CD4-positive, alpha-beta T cell (primary cell): ENCODE measurements at regions of chr5 and their contacts with region 1.

Region 1: GRCh38 chr5:79612667-79613198 is 492 bp downstream of the TENT2 start:
- DNase-seq: no peak
- ATAC-seq: no peak
- H3K4me3 ChIP-seq: peak overlapping the region; percentile 81
- H3K4me3 Mint-ChIP-seq: peak overlapping the region; percentile 91
- H3K27ac ChIP-seq: peak overlapping the region; percentile 76 to 90
- H3K27ac Mint-ChIP-seq: peak overlapping the region; percentile 98
- H3K4me1 ChIP-seq: peaks cover 14% of the 10 kb centered on the region
- H3K4me1 Mint-ChIP-seq: peaks cover 42% of the 10 kb centered on the region
- H3K27me3 ChIP-seq: no peaks in the 10 kb centered on the region
- H3K27me3 Mint-ChIP-seq: no peaks in the 10 kb centered on the region
- CTCF ChIP-seq: no peak

Region 2: DNA sequence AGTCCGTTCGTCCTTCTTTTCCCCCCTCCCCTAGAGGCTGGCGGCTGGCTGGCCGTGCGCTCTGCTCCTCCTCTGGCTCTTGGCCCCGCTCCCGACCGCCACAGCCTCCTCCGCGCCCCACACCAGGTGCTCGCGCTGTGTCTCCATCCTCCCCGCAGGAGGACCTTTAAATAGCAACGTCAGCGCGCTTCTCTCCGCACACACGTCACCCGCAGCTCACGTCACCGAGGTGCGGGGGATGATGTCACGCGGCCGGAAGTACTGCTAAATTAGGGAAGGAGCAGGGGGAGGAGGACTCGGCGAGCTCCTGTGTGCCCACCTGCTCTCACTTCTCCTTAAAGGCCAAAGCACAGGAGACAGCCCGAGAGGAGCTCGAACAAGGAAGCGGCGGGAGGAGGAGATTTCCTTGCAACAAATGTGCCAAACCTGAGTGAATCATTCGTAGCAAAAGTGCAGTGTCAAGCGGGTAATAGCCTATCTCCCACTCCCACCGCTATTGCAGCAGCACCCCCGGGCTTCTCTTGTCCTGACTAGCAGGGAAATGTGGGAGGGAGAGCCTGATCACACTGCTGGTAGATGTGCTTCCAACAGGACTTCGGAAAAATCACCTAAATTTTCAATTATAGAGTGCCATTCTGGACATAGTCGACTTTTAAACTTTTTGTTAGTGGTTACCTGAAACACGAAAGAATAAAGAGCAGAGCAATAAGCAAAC is 98.2 kb before region 1 on chr5:
- CTCF ChIA-PET with region 1: no interaction called
- POLR2A ChIA-PET with region 1: no interaction called
- intact Hi-C with region 1: loop called (anchors 1 to 5 kb)
- DNase-seq: peak; percentile 76 to 97 (median 87)
- ATAC-seq: peak; percentile 85
- H3K4me3 ChIP-seq: peak overlapping the region; percentile 79
- H3K4me3 Mint-ChIP-seq: peak overlapping the region; percentile 98
- H3K27ac ChIP-seq: peak overlapping the region; percentile 69 to 89
- H3K27ac Mint-ChIP-seq: peak overlapping the region; percentile 96
- H3K4me1 ChIP-seq: peaks cover 19% of the 10 kb centered on the region
- H3K4me1 Mint-ChIP-seq: peaks cover 41% of the 10 kb centered on the region
- H3K27me3 ChIP-seq: peaks cover 5 to 15% of the 10 kb centered on the region in 2 experiments
- H3K27me3 Mint-ChIP-seq: peaks cover 34% of the 10 kb centered on the region
- CTCF ChIP-seq: no peak

Region 3: GRCh38 chr5:79990598-79991507 is 378.1 kb after region 1 on chr5 and contains the start of gene MTX3:
- CTCF ChIA-PET with region 1: no interaction called
- POLR2A ChIA-PET with region 1: no interaction called
- intact Hi-C with region 1: loop called in 1 of 2 experiments (anchors 5 kb)
- DNase-seq: peak; percentile 75 to 94 (median 83)
- ATAC-seq: peak; percentile 95
- H3K4me3 ChIP-seq: peak within 1 kb of the TSS; percentile 85
- H3K4me3 Mint-ChIP-seq: peak within 1 kb of the TSS; percentile 88
- H3K27ac ChIP-seq: peak within 1 kb of the TSS; percentile 59 to 68
- H3K27ac Mint-ChIP-seq: peak within 1 kb of the TSS; percentile 92
- H3K4me1 ChIP-seq: peaks cover 17% of the 10 kb centered on the region
- H3K4me1 Mint-ChIP-seq: peaks cover 18% of the 10 kb centered on the region
- H3K27me3 ChIP-seq: no peaks in the 10 kb centered on the region
- H3K27me3 Mint-ChIP-seq: peaks cover 12% of the 10 kb centered on the region
- CTCF ChIP-seq: no peak
- total RNA-seq, gene MTX3: 25.6 to 26.5 TPM

Region 4: DNA sequence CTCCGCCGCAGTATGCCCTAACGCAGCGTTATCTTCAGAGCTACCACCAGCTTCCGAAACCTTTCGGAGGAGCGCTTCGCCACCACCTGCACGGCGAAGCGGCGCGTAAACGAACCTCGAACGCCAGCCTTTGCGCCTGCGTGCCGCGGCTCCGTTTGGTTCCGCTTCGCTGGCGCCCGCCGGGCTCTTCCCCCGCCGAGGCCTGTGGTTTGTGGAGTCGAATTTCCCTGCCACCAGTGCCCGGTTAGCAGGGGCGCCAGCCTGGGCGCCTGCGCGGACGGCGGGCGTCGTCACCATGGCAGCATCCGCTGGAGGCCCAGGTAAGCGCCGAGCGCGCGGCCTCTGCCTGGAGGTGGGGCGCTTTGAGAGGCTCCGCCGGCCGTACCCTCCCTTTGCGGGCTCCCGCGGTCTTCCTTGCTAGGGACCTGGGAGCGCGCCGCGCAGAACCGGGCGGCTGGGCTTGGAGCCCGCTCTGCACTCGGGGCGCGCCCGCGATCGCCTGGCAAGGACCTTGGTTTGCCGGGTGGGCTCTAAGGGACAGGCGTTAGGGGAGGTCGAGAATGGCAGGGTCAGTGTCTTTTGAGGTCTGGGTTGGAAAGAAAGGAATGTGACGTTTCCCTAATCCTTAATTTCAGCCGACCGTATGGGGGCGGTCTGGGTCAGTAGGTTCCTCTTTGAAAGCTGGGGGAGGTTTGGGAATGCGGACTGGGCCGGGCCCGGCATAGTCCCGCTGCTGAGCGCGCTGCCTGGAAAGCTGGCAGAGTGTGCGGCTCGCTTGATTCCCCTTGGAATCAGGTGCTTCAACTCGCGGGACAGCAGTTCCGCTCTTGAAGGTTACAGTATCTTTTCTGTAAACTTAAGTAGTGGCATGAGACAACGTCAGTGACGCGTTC is 875.3 kb after region 1 on chr5 and contains the start of gene FAM151B:
- CTCF ChIA-PET with region 1: no interaction called
- POLR2A ChIA-PET with region 1: no interaction called
- intact Hi-C with region 1: loop called in 1 of 2 experiments (anchors 10 kb)
- DNase-seq: peak; percentile 45 to 91 (median 74)
- ATAC-seq: peak; percentile 88
- H3K4me3 ChIP-seq: peak within 1 kb of the TSS; percentile 58
- H3K4me3 Mint-ChIP-seq: peak within 1 kb of the TSS; percentile 88
- H3K27ac ChIP-seq: no peak within 1 kb of the TSS
- H3K27ac Mint-ChIP-seq: peak within 1 kb of the TSS; percentile 87
- H3K4me1 ChIP-seq: peaks cover 16% of the 10 kb centered on the region
- H3K4me1 Mint-ChIP-seq: peaks cover 21% of the 10 kb centered on the region
- H3K27me3 ChIP-seq: no peaks in the 10 kb centered on the region
- H3K27me3 Mint-ChIP-seq: no peaks in the 10 kb centered on the region
- CTCF ChIP-seq: no peak
- total RNA-seq, gene FAM151B: 0.33 to 0.61 TPM